Panc1 (cell line): ENCODE measurements at regions of chr12 and their contacts with region 1.

Region 1: GRCh38 chr12:53065975-53066931 is 12.9 kb downstream of the SPRYD3 start:
- DNase-seq: no peak
- ATAC-seq: peak; percentile 83
- H3K4me3 ChIP-seq: no peak overlapping the region
- H3K27ac ChIP-seq: no peak overlapping the region
- H3K4me1 ChIP-seq: peaks cover 5% of the 10 kb centered on the region
- H3K27me3 ChIP-seq: no peaks in the 10 kb centered on the region
- CTCF ChIP-seq: peak; percentile 92

Region 2: GRCh38 chr12:52879394-52880351 is 186.6 kb before region 1 on chr12:
- CTCF ChIA-PET with region 1: no interaction called
- POLR2A ChIA-PET with region 1: no interaction called
- in situ Hi-C with region 1: no loop called
- intact Hi-C with region 1: no loop called
- DNase-seq: peak; percentile 77
- ATAC-seq: peak; percentile 92
- H3K4me3 ChIP-seq: peak overlapping the region; percentile 32 to 66
- H3K27ac ChIP-seq: peak overlapping the region; percentile 52; the same call in 1 of the 2 replicates
- H3K4me1 ChIP-seq: peaks cover 14% of the 10 kb centered on the region
- H3K27me3 ChIP-seq: no peaks in the 10 kb centered on the region
- CTCF ChIP-seq: peak; percentile 98

Region 3: GRCh38 chr12:53079226-53080117 is 13.2 kb after region 1 on chr12 and contains the start of gene SPRYD3:
- CTCF ChIA-PET with region 1: interaction called, 13 read pairs
- POLR2A ChIA-PET with region 1: interaction called, 5 read pairs
- in situ Hi-C with region 1: no loop called
- intact Hi-C with region 1: no loop called
- DNase-seq: peak; percentile 78
- ATAC-seq: peak; percentile 99
- H3K4me3 ChIP-seq: peak within 1 kb of the TSS; percentile 67 to 89
- H3K27ac ChIP-seq: peak within 1 kb of the TSS; percentile 95
- H3K4me1 ChIP-seq: 0 out of 2 replicates have a peak, but pooled peaks cover 3% of the 10 kb centered on the region
- H3K27me3 ChIP-seq: no peaks in the 10 kb centered on the region
- CTCF ChIP-seq: no peak
- total RNA-seq, gene SPRYD3: 25.0 TPM

Region 4: GRCh38 chr12:53098982-53099651 is 32.9 kb after region 1 on chr12:
- CTCF ChIA-PET with region 1: interaction called, 43 read pairs
- POLR2A ChIA-PET with region 1: interaction called, 5 read pairs
- in situ Hi-C with region 1: no loop called
- intact Hi-C with region 1: loop called (anchors 1 kb)
- DNase-seq: peak; percentile 70
- ATAC-seq: peak; percentile 64
- H3K4me3 ChIP-seq: peak overlapping the region in 1 of 2 experiments; percentile 52; a peak in 2 of 4 replicates
- H3K27ac ChIP-seq: no peak overlapping the region
- H3K4me1 ChIP-seq: peaks cover 17% of the 10 kb centered on the region
- H3K27me3 ChIP-seq: no peaks in the 10 kb centered on the region
- CTCF ChIP-seq: peak; percentile 98

Region 5: DNA sequence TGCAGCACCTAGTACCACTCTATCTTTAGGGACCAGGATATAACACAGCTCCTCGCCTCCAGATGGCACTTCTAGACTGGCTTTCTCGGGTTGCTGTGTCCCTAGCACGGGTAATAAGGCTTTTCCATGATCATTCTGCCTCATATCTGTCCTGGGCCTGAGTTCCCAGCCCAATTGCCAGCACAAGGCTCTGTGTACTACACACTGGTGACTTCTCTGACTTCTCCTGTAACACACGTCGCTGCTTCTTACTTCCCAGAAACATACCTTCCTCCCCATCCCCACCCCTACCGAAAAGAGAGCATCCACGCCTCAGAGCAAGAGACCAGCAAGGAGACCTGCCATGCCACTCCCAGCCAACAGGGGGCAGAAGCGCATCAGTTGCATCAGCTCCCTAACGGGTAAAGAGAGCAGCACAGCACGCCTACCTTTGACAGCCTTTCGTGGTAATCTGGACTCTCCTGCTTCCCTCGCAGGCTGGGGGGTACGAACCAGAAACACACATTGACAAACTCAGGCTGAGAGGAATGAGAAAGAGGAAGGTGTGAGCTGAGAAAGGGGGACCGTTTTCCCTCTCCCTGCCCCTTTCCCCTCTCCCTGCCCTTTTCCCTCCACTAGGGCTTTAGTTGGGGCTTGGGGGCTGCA is 93.1 kb after region 1 on chr12:
- CTCF ChIA-PET with region 1: interaction called, 6 read pairs
- POLR2A ChIA-PET with region 1: no interaction called
- in situ Hi-C with region 1: no loop called
- intact Hi-C with region 1: loop called (anchors 10 kb)
- DNase-seq: peak; percentile 89
- ATAC-seq: peak; percentile 95
- H3K4me3 ChIP-seq: peak overlapping the region in 1 of 2 experiments; percentile 7; a peak in 1 of 4 replicates
- H3K27ac ChIP-seq: peak overlapping the region; percentile 69; the same call in 1 of the 2 replicates
- H3K4me1 ChIP-seq: no peaks in the 10 kb centered on the region
- H3K27me3 ChIP-seq: no peaks in the 10 kb centered on the region
- CTCF ChIP-seq: peak; percentile 99

Region 6: DNA sequence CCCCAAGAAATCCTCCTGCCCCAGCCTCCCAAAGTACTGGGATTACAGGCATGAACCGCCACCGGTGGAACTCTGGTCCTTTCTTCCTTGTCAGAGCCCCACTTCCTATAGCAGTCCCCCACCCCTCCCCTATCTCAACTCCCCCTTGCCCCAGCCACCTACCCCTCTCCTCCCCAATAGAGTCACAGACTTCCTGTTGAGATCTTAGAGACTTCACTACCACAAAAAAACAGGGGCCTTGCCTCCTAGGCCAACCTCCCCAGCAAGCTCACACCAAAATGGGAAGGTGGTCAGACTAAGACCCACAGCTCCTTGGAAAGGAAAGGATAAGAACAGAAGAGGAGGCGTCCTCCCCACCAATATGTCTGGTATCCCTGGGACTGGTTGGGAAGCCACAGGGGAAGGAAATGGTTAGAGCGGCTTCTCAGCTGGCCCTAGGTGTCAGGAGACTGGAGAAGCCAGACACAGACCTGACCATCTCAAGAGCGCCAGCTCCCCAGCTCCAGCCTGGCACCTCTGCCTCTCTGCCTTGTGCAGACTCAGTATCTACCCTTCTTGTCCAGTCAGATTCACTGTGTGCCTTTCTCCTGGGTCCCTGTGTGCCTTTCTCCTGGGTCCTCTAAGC is 132.3 kb after region 1 on chr12:
- CTCF ChIA-PET with region 1: interaction called, 21 read pairs
- POLR2A ChIA-PET with region 1: no interaction called
- in situ Hi-C with region 1: no loop called
- intact Hi-C with region 1: no loop called
- DNase-seq: no peak
- ATAC-seq: no peak
- H3K4me3 ChIP-seq: no peak overlapping the region
- H3K27ac ChIP-seq: no peak overlapping the region
- H3K4me1 ChIP-seq: no peaks in the 10 kb centered on the region
- H3K27me3 ChIP-seq: no peaks in the 10 kb centered on the region
- CTCF ChIP-seq: no peak